Ascending aorta (tissue), 2 donors: ENCODE measurements at regions of chr9 and their contacts with region 1.

Region 1: DNA sequence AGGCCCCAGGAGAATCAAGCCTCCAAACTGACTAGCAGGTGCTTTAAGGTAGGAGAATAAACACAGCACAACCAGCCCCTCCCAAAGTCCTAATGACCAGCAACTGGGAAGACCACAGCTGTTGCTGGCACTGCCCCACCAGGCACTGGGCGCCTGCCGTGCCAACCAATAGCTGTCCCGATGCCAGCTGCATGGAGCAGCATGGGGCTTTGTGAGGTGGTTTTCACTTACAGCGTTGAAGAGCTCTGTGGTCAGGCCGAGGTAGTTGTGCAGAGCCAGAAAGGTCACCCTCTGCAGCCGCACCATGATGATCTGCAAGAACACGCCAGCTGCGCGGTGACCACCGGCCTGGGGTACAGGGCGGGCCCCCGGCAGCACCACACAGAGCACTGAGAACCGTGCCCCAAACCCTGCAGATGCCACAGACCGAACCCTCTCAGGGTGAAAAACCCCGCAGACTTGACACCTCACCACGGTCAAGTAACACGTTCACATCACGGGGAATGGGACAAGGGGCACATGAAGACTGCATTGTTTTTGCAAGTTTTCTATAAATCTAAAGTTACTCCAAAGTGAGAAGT is 28.7 kb downstream of the PNPLA7 start:
- DNase-seq: no peak
- H3K4me3 ChIP-seq: no peak overlapping the region
- H3K27ac ChIP-seq: no peak overlapping the region
- H3K4me1 ChIP-seq: no peaks in the 10 kb centered on the region
- H3K27me3 ChIP-seq: no peaks in the 10 kb centered on the region
- CTCF ChIP-seq: no peak

Region 2: DNA sequence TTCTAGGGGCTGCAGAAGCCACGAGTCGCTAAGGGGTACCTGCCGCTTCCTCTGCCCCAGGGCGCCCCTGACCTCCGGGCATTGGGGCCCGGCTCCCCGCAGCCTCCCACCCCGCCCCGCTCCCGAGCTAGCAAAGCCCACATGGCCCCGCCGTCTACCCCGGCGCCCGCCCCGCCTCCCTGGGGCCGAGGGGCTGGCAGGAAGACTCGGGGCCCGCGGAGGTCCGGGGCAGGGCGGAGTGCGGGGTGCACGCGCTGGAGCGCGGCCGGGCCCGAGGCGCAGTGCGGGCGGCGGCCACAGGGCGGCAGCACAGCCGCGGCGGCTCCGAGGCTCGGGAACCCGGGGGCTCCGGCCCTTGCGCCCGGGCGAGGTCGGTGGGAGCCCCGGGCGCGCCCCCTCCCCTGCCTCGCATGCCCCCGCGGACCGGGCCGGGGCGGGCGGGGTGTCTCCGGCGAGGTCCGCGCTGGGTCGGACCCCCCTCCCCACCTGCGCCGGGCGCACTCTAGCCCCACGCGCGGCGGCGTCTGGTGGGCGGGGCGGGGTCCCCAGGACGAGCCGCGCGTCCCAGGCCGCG is 226.2 kb before region 1 on chr9:
- intact Hi-C with region 1: loop called (anchors 10 kb)
- DNase-seq: no peak
- H3K4me3 ChIP-seq: peak overlapping the region; percentile 44 to 57
- H3K27ac ChIP-seq: no peak overlapping the region
- H3K4me1 ChIP-seq: peaks cover 5 to 8% of the 10 kb centered on the region in 2 donors
- H3K27me3 ChIP-seq: peaks cover 27% of the 10 kb centered on the region
- CTCF ChIP-seq: peak in 1 of 3 experiments; percentile 86

Region 3: DNA sequence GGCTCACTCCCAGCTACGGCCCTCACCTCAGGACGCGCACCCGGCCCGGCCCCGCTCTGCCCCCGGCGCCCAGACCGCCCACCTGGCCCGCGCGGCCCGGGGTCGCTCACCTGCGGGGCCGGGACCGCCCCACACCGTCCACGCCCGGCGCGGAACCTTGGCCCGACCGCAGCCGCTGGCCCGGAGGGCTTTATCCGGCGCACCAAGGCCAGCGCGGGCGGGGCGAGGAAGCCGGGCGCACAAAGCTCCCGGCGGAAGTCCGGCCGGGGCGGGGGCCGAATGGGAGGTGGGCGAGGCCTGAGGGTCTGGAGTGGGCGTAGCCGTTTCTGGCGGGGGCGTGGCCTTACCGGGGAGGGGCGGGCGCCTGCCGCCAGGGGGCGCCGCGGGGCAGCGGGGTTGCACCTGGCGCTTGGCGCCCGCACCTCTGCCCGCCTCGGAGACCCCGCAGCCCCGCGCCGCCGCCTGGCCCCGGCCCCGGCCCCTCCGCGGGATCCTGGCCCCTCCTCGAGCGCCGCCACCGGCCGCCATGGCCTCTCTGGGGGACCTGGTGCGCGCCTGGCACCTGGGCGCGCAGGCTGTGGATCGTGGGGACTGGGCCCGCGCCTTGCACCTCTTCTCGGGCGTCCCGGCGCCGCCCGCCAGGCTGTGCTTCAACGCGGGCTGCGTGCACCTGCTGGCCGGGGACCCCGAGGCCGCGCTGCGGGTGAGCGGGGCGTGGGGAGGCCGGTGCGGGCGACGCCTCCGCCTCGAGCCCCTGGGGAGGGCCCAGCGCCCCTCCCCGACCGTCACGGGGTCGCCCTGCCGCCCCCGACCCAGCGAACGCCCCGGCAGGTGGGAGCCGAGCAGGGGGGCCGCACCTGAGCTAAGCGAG is 98.3 kb before region 1 on chr9 and contains the starts of genes EXD3 and NOXA1:
- intact Hi-C with region 1: loop called (anchors 10 kb)
- DNase-seq: peak; percentile 62 to 95
- H3K4me3 ChIP-seq: peak within 1 kb of the TSS; percentile 73 to 100
- H3K27ac ChIP-seq: peak within 1 kb of the TSS; percentile 51 to 87
- H3K4me1 ChIP-seq: peaks cover 7 to 15% of the 10 kb centered on the region in 2 donors
- H3K27me3 ChIP-seq: no peaks in the 10 kb centered on the region
- CTCF ChIP-seq: peak; percentile 60 to 92 (median 68)
- total RNA-seq, gene EXD3: 16.7 TPM
- total RNA-seq, gene NOXA1: 6.9 TPM

Region 4: GRCh38 chr9:137435980-137436760 is 85.3 kb before region 1 on chr9:
- intact Hi-C with region 1: no loop called
- DNase-seq: peak in 1 of 2 donors; percentile 87
- H3K4me3 ChIP-seq: no peak overlapping the region
- H3K27ac ChIP-seq: no peak overlapping the region
- H3K4me1 ChIP-seq: peaks cover 6 to 8% of the 10 kb centered on the region in 2 donors
- H3K27me3 ChIP-seq: peaks cover under 1% of the 10 kb centered on the region
- CTCF ChIP-seq: no peak